ENCODE measurements at regions of chr19 and their contacts with region 1.

Region 1: DNA sequence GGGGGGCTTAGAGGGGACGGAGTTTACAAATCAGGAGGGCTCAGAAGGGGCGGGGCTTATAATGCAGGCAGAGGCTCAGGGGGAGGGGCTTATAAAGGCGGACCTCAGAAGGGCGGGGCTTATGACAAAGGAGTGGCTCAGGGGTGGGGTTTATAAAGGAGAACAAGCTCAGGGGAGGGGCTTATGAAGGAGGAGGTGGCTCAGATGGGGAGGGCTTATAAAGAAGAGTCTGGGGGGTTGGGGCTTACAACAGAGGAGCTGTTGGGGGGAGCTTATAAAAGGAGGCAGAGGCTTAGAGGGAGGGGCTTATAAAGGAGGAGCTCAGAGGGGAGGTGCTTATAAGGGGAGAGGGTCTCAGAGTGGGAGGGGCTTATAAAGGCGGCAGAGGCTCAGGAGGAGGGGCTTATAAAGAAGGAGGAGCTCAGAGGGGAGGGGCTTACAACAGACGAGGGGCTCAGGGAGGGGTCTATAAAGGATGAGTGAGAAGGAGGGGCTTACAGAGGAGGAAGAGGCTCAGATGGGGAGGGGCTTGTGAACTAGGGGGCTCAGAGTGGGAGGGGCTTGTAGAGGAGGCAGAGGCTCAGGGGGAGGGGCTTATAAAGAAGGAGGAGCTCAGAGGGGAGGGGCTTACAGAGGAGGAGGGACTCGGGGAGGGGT is 1.0 kb downstream of the SMIM24 start:
- DNase-seq: no peak
- ATAC-seq: no peak; the same call in 1 of the 2 replicates
- H3K4me3 ChIP-seq: no peak overlapping the region
- H3K27ac ChIP-seq: no peak overlapping the region
- H3K4me1 ChIP-seq: no peaks in the 10 kb centered on the region
- H3K27me3 ChIP-seq: no peaks in the 10 kb centered on the region
- CTCF ChIP-seq: no peak

Region 2: DNA sequence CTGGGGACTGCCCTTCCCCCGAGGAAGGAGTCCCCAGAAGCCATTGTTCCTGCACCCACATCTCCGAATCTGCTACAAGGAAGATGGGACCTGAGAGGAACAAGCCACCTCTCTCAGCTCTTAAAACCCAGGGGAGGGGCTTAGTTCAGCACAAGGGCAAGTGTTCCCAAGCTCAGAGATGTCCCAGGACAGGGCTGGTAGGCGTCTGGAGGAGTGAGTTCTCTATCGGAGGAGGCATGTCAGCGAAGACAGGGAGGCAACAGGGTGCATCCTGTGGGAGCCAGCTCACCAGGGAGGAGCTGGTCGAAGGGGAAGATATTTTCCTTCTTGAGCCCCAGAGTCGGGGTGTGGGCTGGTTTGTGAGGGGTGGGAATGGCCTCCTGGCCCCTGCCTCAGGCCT is 200.0 kb before region 1 on chr19:
- CTCF ChIA-PET with region 1: interaction called, 11 read pairs
- POLR2A ChIA-PET with region 1: no interaction called
- in situ Hi-C with region 1: no loop called
- intact Hi-C with region 1: no loop called
- DNase-seq: no peak
- ATAC-seq: no peak
- H3K4me3 ChIP-seq: no peak overlapping the region
- H3K27ac ChIP-seq: no peak overlapping the region
- H3K4me1 ChIP-seq: peaks cover 3% of the 10 kb centered on the region; the same call in 1 of the 2 replicates
- H3K27me3 ChIP-seq: no peaks in the 10 kb centered on the region
- CTCF ChIP-seq: no peak

Region 3: GRCh38 chr19:3343619-3344502 is 135.4 kb before region 1 on chr19:
- CTCF ChIA-PET with region 1: interaction called, 12 read pairs
- POLR2A ChIA-PET with region 1: no interaction called
- in situ Hi-C with region 1: no loop called
- intact Hi-C with region 1: no loop called
- DNase-seq: no peak
- ATAC-seq: peak; percentile 90
- H3K4me3 ChIP-seq: peak overlapping the region; percentile 35 to 46
- H3K27ac ChIP-seq: peak overlapping the region; percentile 71
- H3K4me1 ChIP-seq: peaks cover 27% of the 10 kb centered on the region
- H3K27me3 ChIP-seq: no peaks in the 10 kb centered on the region
- CTCF ChIP-seq: no peak

Region 4: DNA sequence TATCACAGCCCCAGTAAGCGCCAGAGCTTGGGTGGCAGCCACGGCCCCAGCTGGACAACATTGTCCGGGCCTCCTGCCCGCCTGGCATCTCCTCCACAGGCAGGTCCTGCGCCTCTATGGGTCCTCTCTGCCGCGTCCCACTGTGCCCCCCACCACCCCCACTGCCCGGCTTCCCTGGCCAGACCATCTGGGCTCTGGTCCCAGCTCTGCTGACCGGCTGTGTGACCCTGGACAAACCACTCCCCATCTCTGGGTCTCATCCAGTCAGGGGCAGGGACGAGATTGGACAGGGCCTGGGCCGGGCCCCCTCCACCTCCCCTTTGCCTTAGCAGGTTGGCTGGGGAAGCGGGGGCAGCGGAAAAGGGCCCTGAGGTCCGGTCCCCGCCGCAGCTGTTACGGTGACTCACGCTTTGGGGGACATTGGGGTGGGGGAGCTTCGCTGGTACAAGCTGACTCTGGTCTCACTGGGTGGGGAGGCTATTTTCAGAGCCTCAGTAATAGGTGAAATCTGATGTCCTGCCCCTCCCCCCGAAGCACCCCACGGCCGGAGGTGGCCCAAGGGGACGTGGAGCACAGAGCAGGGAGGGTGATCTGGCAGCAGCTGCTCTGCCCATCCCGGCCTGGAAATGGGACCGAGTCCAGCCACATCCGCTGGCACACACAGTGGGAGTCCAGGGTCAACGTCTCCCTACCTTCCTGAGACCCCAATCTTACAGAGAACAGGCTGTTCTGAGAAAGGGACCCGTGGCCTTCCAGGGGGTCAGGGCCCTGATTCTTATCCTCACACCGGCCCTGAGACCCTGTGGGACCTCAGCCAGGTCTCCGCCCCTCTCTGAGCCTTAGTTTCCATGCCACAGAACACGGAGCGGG is 103.8 kb before region 1 on chr19:
- CTCF ChIA-PET with region 1: no interaction called
- POLR2A ChIA-PET with region 1: no interaction called
- in situ Hi-C with region 1: no loop called
- intact Hi-C with region 1: no loop called
- DNase-seq: no peak
- ATAC-seq: peak; percentile 82
- H3K4me3 ChIP-seq: peak overlapping the region in 1 of 2 experiments; percentile 23; a peak in 2 of 4 replicates
- H3K27ac ChIP-seq: peak overlapping the region; percentile 95
- H3K4me1 ChIP-seq: peaks cover 51% of the 10 kb centered on the region
- H3K27me3 ChIP-seq: no peaks in the 10 kb centered on the region
- CTCF ChIP-seq: no peak

Measured in Panc1 (cell line).